ENCODE measurements at regions of chr14 and their contacts with region 1.

Region 1: GRCh38 chr14:49173765-49174373 is 412.3 kb downstream of the RPS29 start:
- DNase-seq: peak; percentile 72 to 82
- H3K4me3 ChIP-seq: no peak overlapping the region
- H3K4me3 Mint-ChIP-seq: no peak overlapping the region
- H3K27ac Mint-ChIP-seq: no peak overlapping the region
- H3K4me1 ChIP-seq: no peaks in the 10 kb centered on the region
- H3K4me1 Mint-ChIP-seq: no peaks in the 10 kb centered on the region
- H3K27me3 ChIP-seq: no peaks in the 10 kb centered on the region
- H3K27me3 Mint-ChIP-seq: peaks cover 6% of the 10 kb centered on the region
- CTCF ChIP-seq: peak; percentile 68 to 83

Region 2: DNA sequence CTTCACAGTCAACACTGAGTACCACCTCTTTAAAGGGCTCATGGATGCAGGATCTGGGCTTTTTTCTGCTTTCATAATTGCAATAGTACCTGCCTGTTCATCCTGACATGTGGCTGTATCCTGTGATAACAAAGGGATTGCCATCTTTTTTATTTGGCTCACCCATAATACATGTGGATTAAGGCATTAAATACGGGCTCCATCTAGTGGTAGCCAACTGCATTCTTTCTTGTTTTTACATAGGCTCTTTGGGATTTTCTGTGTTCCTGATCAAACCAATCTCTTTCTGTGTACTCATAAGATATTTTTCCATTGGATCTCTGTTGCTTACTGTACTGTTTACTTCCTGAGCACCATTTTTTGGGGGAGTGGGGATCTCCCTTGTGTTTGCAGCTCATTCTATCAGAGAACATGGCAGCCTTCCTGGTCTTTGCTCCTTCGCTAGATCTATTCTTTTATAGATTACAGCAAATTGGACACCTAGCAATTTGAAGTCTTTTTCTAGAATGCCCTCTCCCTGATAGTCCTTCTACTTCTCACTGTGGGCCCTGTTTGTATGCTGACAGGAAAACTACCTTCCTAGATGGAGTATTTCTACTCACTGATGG is 775.1 kb before region 1 on chr14:
- CTCF ChIA-PET with region 1: no interaction called
- POLR2A ChIA-PET with region 1: no interaction called
- intact Hi-C with region 1: loop called (anchors 1 kb)
- DNase-seq: peak in 1 of 2 experiments; percentile 37
- H3K4me3 ChIP-seq: no peak overlapping the region
- H3K4me3 Mint-ChIP-seq: no peak overlapping the region
- H3K27ac Mint-ChIP-seq: no peak overlapping the region
- H3K4me1 ChIP-seq: no peaks in the 10 kb centered on the region
- H3K4me1 Mint-ChIP-seq: no peaks in the 10 kb centered on the region
- H3K27me3 ChIP-seq: no peaks in the 10 kb centered on the region
- H3K27me3 Mint-ChIP-seq: no peaks in the 10 kb centered on the region
- CTCF ChIP-seq: peak; percentile 56 to 66

Region 3: GRCh38 chr14:48614003-48614402 is 559.9 kb before region 1 on chr14:
- CTCF ChIA-PET with region 1: no interaction called
- POLR2A ChIA-PET with region 1: no interaction called
- intact Hi-C with region 1: loop called (anchors 10 kb)
- DNase-seq: no peak
- H3K4me3 ChIP-seq: no peak overlapping the region
- H3K4me3 Mint-ChIP-seq: no peak overlapping the region
- H3K27ac Mint-ChIP-seq: no peak overlapping the region
- H3K4me1 ChIP-seq: no peaks in the 10 kb centered on the region
- H3K4me1 Mint-ChIP-seq: no peaks in the 10 kb centered on the region
- H3K27me3 ChIP-seq: no peaks in the 10 kb centered on the region
- H3K27me3 Mint-ChIP-seq: no peaks in the 10 kb centered on the region
- CTCF ChIP-seq: no peak

Region 4: DNA sequence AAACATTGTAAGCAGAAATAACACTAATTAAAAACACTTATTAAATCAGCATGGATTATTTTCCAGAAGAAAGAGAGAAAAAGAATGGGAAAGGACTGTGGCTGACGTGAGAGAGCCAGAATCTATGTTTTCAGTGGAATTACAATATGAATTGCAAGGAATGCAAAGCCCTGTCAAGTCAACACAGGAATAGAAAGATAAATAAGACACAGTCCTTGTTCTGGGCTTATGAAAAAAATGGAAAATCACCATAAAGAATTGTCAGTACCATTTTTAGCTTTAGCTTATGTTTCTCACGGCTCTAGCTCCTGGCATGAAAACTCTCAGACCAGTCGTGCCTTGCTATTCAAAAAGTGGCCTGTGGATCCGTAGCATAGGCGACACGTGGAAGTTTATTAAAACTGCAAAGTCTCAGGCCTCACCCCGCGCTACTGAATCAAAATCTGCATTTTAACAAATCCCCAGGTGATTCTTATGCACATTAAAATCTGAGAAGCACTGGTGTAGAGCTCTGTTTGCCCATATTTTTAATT is 136.8 kb before region 1 on chr14:
- CTCF ChIA-PET with region 1: no interaction called
- POLR2A ChIA-PET with region 1: no interaction called
- intact Hi-C with region 1: no loop called
- DNase-seq: no peak
- H3K4me3 ChIP-seq: no peak overlapping the region
- H3K4me3 Mint-ChIP-seq: no peak overlapping the region
- H3K27ac Mint-ChIP-seq: no peak overlapping the region
- H3K4me1 ChIP-seq: no peaks in the 10 kb centered on the region
- H3K4me1 Mint-ChIP-seq: no peaks in the 10 kb centered on the region
- H3K27me3 ChIP-seq: no peaks in the 10 kb centered on the region
- H3K27me3 Mint-ChIP-seq: no peaks in the 10 kb centered on the region
- CTCF ChIP-seq: no peak

Region 5: DNA sequence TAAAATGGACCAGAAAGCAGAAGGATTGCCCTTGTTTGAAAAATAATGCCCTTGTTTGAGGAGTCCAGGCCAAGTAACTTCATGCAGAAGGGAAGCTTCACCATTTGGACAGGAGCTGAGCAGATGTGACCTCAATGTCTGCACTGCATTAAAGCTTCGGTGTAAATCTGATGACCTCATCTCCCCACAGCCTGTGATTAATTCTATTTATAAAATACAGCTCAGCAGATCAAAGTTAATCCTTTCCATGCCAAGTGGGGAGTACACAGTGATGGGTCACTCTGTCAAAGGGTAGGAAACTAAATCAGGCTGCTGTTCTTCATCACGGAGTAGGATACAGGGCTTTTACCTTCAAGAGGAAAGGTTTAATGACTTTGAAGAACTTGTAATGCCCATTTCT is 121.3 kb before region 1 on chr14:
- CTCF ChIA-PET with region 1: no interaction called
- POLR2A ChIA-PET with region 1: no interaction called
- intact Hi-C with region 1: no loop called
- DNase-seq: no peak
- H3K4me3 ChIP-seq: no peak overlapping the region
- H3K4me3 Mint-ChIP-seq: no peak overlapping the region
- H3K27ac Mint-ChIP-seq: no peak overlapping the region
- H3K4me1 ChIP-seq: no peaks in the 10 kb centered on the region
- H3K4me1 Mint-ChIP-seq: peaks cover under 1% of the 10 kb centered on the region
- H3K27me3 ChIP-seq: no peaks in the 10 kb centered on the region
- H3K27me3 Mint-ChIP-seq: no peaks in the 10 kb centered on the region
- CTCF ChIP-seq: no peak

Region 6: GRCh38 chr14:49106741-49107667 is 66.9 kb before region 1 on chr14:
- CTCF ChIA-PET with region 1: no interaction called
- POLR2A ChIA-PET with region 1: no interaction called
- intact Hi-C with region 1: loop called (anchors 5 kb)
- DNase-seq: peak; percentile 80 to 91
- H3K4me3 ChIP-seq: no peak overlapping the region; the same call in 1 of the 2 replicates
- H3K4me3 Mint-ChIP-seq: peak overlapping the region; percentile 42
- H3K27ac Mint-ChIP-seq: peak overlapping the region; percentile 76
- H3K4me1 ChIP-seq: peaks cover 32% of the 10 kb centered on the region
- H3K4me1 Mint-ChIP-seq: peaks cover 24% of the 10 kb centered on the region
- H3K27me3 ChIP-seq: no peaks in the 10 kb centered on the region
- H3K27me3 Mint-ChIP-seq: no peaks in the 10 kb centered on the region
- CTCF ChIP-seq: peak in 1 of 2 experiments; percentile 17

Region 7: DNA sequence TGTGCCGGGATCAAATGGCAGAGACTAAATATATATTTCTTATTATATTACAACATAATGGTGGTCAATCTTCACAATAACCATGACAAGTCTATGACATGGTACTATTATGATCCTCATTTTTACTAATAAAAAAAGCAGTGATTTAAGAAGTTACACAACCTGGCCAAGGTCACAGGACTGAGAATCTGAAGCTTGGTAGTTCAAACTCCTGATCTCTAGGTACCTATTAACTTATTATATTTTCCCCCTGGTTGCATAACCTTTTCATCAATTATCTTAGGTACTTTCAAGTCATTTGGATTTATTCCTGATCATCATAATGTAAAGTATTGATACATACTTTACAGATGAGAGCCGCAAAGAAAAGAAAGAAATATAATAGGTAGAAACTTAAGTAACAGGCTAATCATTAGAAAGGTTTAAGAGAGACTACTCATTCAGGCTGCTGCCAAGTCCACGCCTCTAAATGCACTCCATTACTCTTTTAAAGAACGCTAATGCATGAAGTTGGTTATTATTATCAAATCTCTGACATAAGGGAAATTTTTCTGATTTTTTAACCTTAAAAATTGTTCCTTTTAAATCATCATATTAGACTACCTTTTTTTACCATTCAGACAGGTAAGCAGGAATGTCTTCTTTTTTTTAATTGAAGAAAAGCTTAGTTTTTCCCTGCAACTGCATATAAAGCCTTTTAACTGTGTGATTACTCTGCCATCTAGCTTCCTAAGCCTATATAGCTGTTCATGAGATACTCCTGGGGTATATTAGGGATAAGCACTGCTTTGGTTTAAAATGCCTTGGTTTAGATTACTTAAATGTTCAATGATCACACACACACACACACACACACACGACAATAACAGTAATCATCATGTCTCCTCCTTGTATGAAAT is 376.7 kb after region 1 on chr14:
- CTCF ChIA-PET with region 1: interaction called, 3 read pairs
- POLR2A ChIA-PET with region 1: no interaction called
- intact Hi-C with region 1: loop called (anchors 5 kb)
- DNase-seq: peak in 1 of 2 experiments; percentile 27
- H3K4me3 ChIP-seq: no peak overlapping the region
- H3K4me3 Mint-ChIP-seq: no peak overlapping the region
- H3K27ac Mint-ChIP-seq: no peak overlapping the region
- H3K4me1 ChIP-seq: peaks cover 9% of the 10 kb centered on the region
- H3K4me1 Mint-ChIP-seq: peaks cover 6% of the 10 kb centered on the region
- H3K27me3 ChIP-seq: no peaks in the 10 kb centered on the region
- H3K27me3 Mint-ChIP-seq: no peaks in the 10 kb centered on the region
- CTCF ChIP-seq: peak in 1 of 2 experiments; percentile 55